Left lung (tissue), 14 donors: ENCODE measurements at regions of chr5 and their contacts with region 1.

Region 1: DNA sequence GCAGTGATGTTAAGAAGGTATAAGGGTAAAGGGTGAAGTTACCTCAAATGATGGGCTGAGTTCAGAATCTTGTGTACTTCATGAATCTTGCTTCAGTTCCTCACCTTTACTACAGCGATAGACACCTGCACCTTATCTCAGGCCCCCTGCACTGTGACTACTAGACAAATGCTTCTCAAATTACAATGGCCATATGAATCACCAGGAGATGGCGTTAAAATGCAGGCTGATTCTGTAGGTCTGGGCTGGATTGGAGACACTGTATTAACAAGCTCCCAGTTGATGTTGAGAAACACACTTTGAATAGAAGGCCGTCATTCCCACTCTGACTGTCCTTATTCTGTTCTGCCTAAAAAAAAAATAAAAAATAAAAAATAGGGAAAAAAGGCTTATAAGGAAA is 29.8 kb downstream of the TARS1 start:
- DNase-seq: peak in 1 of 4 donors; percentile 72
- ATAC-seq: peak; percentile 66
- H3K4me3 ChIP-seq: no peak overlapping the region
- H3K27ac ChIP-seq: no peak overlapping the region
- H3K4me1 ChIP-seq: no peaks in the 10 kb centered on the region
- H3K27me3 ChIP-seq: no peaks in the 10 kb centered on the region
- CTCF ChIP-seq: no peak

Region 2: DNA sequence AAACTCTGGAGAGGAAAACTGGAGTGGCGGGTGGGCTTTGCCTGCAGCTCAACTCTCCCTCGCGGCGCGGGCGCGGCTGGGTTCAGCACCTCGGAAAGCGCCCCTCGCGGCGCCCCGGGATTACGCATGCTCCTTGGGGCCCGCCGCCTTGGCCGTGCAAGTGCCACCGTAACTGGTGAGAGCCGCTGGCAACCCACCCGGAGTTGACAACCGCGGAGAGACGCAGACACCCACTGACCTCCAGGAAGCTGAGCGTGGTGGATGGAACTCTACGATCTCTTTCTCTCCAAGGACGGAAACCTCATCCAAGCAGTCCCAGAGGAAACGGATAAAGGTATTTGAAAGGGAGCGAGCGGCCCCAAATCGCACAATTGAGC is 465.4 kb after region 1 on chr5:
- intact Hi-C with region 1: loop called in 1 of 2 experiments (anchors 10 kb)
- DNase-seq: peak; percentile 46 to 86 (median 76)
- ATAC-seq: peak; percentile 90
- H3K4me3 ChIP-seq: peak overlapping the region; percentile 4 to 15
- H3K27ac ChIP-seq: no peak overlapping the region
- H3K4me1 ChIP-seq: peaks cover 11 to 12% of the 10 kb centered on the region in 2 donors
- H3K27me3 ChIP-seq: peaks cover 35 to 69% of the 10 kb centered on the region in 2 donors
- CTCF ChIP-seq: peak in 1 of 2 donors; percentile 8